ENCODE measurements at regions of chr22 and their contacts with region 1.

Region 1: DNA sequence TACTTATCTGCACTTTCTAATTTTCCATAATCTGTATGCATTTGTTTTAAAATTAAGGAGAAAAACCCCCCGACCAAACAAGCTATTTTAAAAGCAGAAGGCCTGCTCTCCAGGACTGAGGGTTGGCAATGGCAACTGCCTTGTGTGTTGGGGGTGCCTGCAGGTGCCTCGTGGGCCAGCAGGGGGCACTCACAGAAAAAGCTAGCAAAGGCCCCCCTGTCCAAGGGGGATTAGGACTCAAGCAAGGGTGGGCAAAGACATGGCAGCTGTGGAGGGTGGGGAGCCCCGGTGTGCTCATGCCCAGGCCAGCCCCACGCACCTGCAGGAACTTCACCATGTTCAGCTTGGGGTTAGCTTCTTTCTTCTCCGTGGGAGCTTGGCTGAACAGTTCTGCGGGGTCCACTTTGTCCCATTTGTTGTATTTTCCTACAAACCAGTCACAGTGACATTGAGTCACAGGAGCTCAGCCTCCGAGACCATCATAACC is 10.3 kb downstream of the TOP3B start:
- DNase-seq: peak; percentile 40
- H3K4me3 ChIP-seq: no peak overlapping the region
- H3K27ac ChIP-seq: no peak overlapping the region
- H3K4me1 ChIP-seq: no peaks in the 10 kb centered on the region
- H3K27me3 ChIP-seq: no peaks in the 10 kb centered on the region
- CTCF ChIP-seq: peak; percentile 87 to 93
- POLR2A ChIP-seq: no peak

Region 2: DNA sequence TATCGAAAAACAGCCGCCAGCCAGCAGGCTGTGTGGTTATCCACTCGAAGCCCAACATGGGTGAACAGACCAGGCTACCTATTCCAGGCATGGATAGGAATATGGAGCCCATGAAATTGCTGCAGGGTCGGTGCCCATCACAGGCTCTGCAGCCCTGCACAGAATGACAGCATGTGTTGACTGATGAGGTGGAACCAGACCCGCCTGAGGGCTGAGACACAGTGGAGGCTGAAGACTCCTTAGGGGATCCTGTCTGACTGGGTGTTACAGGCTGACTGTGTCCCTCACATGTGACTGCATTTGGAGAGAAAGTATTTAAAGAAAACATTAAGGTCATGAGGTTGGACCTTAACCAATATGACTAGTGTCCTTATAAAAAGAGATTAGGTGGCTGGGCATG is 230.5 kb before region 1 on chr22:
- CTCF ChIA-PET with region 1: no interaction called
- POLR2A ChIA-PET with region 1: no interaction called
- dilution Hi-C with region 1: no loop called
- intact Hi-C with region 1: no loop called
- DNase-seq: no peak
- H3K4me3 ChIP-seq: no peak overlapping the region
- H3K27ac ChIP-seq: no peak overlapping the region
- H3K4me1 ChIP-seq: no peaks in the 10 kb centered on the region
- H3K27me3 ChIP-seq: peaks cover 2% of the 10 kb centered on the region in 2 experiments
- CTCF ChIP-seq: no peak
- POLR2A ChIP-seq: no peak

Region 3: DNA sequence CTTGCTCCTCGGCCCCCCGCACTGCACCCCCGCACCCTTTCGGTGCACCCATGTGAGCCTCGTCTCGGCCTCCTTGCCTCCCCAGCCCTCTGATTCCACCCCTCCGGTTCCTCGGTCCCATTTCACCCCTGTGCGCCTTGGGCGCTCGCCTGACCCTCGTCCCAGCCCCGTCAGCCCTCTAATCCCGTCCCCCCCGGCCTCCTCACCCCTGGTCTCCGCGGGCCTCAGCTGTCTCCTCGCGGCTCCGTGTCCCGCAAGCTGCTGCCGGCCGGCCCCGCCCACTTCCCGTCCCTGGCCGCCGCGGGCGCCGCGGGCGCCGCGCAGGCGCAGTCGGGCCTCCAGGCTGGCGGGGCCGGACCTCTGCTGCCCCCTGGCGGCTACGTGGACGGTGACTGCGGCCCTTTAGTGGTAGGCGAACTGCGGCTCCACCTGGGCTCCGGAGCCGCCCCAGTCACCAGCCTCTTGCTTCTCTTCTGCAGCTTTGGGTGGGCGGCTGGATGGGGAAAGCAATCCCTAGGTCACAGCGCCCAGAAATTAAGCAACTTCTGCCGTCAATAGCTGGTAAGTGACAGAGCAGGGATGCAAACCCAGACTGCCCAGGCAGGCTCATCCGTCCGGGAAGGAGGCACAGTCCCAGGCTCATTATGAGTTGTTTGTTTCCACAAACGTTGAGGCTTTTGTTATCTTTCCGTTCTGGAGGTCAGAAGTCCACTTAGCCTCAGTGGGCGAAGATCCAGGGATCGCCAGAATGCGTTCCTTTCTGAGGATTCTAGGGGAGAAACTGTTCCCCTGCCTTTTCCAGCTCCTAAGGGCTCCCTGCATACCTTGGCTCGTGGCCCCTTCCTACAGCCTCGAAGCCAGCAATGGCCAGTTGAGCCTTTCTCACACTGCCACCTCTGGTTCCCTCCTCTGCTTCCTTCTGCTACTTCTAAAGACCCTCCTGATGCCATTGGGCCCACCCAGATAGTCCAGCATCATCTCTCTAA is 19.5 kb before region 1 on chr22 and contains the start of gene PPM1F:
- CTCF ChIA-PET with region 1: interaction called, 20 read pairs
- POLR2A ChIA-PET with region 1: no interaction called
- dilution Hi-C with region 1: no loop called
- intact Hi-C with region 1: no loop called
- DNase-seq: peak; percentile 81
- H3K4me3 ChIP-seq: peak within 1 kb of the TSS; percentile 70 to 93 (median 89)
- H3K27ac ChIP-seq: peak within 1 kb of the TSS; percentile 73
- H3K4me1 ChIP-seq: peaks cover 40% of the 10 kb centered on the region
- H3K27me3 ChIP-seq: no peaks in the 10 kb centered on the region
- CTCF ChIP-seq: peak; percentile 86 to 93
- POLR2A ChIP-seq: peak; percentile 89
- total RNA-seq, gene PPM1F: 171 and 178 TPM in 2 replicates

Region 4: DNA sequence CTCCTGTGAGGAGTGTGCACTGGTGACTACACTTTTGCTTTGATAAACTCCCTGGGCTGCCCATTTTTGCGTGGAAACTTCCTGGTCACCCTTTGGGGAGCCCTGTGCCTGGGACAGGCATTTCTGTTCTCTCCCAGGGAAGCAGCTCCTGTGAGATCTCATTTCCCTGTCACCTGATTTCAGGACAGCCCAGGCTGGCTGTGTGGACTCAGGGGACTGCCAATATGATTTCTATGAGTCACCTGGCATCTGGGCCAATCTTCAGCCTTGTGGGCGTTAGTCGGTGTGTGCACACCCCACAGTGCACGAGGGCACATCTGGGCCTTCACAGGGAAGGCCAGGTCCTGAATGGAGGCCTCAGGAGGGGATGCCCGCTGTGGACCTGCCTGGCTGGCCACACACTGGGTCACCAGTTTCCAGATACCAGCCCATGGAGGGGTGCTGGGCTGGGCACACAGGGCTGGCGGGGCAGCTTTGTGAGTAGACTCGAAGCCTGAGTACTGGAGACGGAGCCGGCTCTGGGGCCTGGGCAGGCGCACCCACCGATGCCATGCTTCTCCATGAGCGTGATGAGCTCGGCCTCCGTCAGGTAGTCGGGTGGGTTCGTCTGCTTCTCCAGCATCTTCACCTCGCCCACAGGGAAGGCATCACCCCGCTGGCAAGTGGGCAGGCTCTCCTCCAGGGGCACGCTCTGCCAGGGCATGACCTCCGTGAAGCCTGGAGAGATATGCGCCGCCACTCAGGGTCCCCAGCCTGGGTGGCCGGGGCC is 10.3 kb before region 1 on chr22:
- CTCF ChIA-PET with region 1: interaction called, 15 read pairs
- POLR2A ChIA-PET with region 1: no interaction called
- dilution Hi-C with region 1: no loop called
- intact Hi-C with region 1: no loop called
- DNase-seq: no peak
- H3K4me3 ChIP-seq: no peak overlapping the region
- H3K27ac ChIP-seq: no peak overlapping the region
- H3K4me1 ChIP-seq: no peaks in the 10 kb centered on the region
- H3K27me3 ChIP-seq: no peaks in the 10 kb centered on the region
- CTCF ChIP-seq: no peak
- POLR2A ChIP-seq: no peak

Region 5: DNA sequence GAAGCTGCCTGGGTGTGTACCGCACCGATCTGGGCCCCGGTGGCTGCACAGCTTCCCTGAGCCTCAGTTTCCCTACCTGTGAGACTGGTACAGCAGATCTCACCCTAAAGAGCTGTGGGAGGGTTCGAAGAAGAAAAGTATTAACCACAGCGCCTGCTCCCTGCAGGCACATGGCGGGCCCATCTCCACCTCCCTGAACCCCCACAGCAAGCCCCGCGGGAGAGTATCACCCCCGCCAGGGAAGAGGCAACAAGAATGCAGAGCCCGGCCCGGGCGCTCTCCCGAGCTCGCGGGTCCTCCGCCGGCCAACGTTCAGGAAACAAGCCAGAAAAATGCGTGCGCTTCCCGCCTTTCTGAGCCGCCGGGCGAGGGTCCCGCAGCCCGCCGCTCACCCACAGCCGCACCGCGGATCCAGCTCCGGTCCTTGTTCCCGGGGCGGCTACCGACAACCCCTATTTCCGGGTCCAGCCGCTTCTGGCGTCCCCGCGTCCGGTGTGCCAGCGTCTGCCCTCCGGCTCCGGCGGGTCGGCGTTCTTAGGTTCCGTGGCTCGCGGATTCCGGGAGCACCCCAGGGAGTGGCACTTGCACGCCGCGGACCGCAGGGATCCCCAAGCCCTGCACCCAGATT is 10.1 kb after region 1 on chr22 and contains the start of gene TOP3B:
- CTCF ChIA-PET with region 1: interaction called, 25 read pairs
- POLR2A ChIA-PET with region 1: no interaction called
- dilution Hi-C with region 1: no loop called
- intact Hi-C with region 1: no loop called
- DNase-seq: peak; percentile 62
- H3K4me3 ChIP-seq: peak within 1 kb of the TSS; percentile 61 to 99 (median 91)
- H3K27ac ChIP-seq: peak within 1 kb of the TSS; percentile 40
- H3K4me1 ChIP-seq: peaks cover 8% of the 10 kb centered on the region
- H3K27me3 ChIP-seq: no peaks in the 10 kb centered on the region
- CTCF ChIP-seq: no peak
- POLR2A ChIP-seq: peak; percentile 89
- total RNA-seq, gene TOP3B: 49.9 and 56.5 TPM in 2 replicates

Region 6: DNA sequence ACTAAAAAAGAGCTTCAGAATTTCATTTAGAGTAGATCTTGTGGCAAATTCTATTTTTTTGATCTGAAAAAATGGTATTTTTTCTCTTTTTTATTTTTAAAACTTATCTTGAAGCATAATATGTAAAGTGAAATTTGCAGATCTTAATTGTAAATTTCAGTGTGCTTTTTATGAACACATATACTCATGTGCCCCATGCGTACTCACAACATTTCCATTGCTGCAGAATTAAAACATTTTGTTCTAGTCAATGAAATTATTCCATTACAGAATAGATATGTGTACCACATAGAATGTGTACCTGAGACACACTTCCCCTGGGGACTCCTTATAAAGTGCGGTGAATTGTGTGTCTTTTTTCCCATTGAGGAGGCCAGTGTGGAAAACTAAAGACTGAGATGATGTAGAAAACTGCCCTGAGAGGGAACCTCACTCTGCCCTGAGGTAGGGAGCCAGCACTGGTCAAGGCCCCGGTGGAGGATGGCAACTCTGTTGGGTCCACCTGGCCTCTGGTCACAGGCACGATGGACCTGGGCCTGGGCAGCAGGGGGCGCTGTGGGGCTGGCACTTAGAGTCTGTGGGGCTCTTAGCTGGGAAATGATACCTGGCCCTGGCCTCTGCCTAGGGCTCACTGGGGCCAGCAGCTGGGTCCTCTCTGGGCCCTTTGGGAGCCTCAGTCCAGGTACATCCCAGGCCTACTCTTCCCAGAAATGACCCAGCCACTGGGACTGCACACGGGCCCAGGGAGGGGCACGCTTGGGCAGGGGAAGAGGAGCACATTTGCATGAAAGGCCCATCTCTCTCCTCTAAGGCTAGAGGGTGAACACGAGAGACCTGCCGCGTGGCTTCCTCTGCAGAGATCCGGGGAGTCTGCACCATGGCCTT is 88.1 kb after region 1 on chr22:
- CTCF ChIA-PET with region 1: interaction called, 10 read pairs
- POLR2A ChIA-PET with region 1: no interaction called
- dilution Hi-C with region 1: no loop called
- intact Hi-C with region 1: no loop called
- DNase-seq: peak; percentile 20
- H3K4me3 ChIP-seq: no peak overlapping the region
- H3K27ac ChIP-seq: no peak overlapping the region
- H3K4me1 ChIP-seq: no peaks in the 10 kb centered on the region
- H3K27me3 ChIP-seq: peaks cover 17 to 19% of the 10 kb centered on the region in 2 experiments
- CTCF ChIP-seq: peak; percentile 78 to 88
- POLR2A ChIP-seq: no peak

Region 7: GRCh38 chr22:22137891-22138290 is 165.6 kb after region 1 on chr22:
- CTCF ChIA-PET with region 1: no interaction called
- POLR2A ChIA-PET with region 1: no interaction called
- dilution Hi-C with region 1: no loop called
- intact Hi-C with region 1: no loop called
- DNase-seq: no peak
- H3K4me3 ChIP-seq: no peak overlapping the region
- H3K27ac ChIP-seq: no peak overlapping the region
- H3K4me1 ChIP-seq: no peaks in the 10 kb centered on the region
- H3K27me3 ChIP-seq: peaks cover 33 to 72% of the 10 kb centered on the region in 2 experiments
- CTCF ChIP-seq: no peak
- POLR2A ChIP-seq: no peak